Prostate gland (tissue), 2 donors: ENCODE measurements at regions of chr15 and their contacts with region 1.

Region 1: DNA sequence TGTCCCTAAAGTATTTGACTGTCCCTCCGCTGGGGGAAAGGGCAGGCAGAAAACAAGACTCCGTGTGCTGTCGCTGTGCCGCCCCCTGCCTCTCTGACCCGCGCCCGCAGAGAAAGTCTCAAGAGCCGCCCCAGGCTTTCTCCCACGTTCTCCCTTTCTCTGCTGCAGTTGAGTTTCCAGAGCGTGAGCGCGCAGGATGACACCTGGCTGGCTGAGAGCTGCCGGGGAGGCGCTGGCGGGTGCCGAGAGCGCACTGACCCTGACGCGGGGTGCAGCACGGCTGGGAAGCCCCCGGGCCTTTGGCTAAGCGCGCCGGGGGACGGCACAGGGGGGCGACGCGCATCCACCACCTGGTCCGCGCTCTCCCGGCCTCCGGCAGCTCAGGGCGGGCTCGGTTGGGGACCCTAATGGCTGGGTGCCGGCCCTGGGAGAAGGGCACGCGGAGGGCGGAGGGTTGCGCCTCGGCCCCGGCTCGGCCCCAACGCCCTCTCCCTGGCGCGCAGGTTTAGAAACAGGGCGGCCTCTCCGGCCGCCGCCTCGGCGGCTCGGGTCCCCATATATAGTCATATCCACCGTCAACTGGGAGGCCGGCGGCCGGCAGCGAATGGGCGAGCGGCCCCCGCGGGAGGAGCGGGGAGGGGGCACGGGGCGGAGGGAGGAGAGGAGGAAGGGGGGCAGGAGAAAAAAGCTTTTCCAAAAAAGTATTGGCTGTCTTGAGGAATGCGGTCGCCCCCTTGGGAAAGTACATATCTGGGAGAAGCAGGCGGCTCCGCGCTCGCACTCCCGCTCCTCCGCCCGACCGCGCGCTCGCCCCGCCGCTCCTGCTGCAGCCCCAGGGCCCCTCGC is at the start of gene TPM1:
- DNase-seq: peak; percentile 63
- H3K4me3 ChIP-seq: peak within 1 kb of the TSS; percentile 51 to 58
- H3K27ac ChIP-seq: peak within 1 kb of the TSS; percentile 91 to 95
- H3K4me1 ChIP-seq: peaks cover under 1% of the 10 kb centered on the region
- H3K27me3 ChIP-seq: no peaks in the 10 kb centered on the region
- CTCF ChIP-seq: no peak
- POLR2A ChIP-seq: peak; percentile 26
- total RNA-seq, gene TPM1: 564 to 629 TPM

Region 2: DNA sequence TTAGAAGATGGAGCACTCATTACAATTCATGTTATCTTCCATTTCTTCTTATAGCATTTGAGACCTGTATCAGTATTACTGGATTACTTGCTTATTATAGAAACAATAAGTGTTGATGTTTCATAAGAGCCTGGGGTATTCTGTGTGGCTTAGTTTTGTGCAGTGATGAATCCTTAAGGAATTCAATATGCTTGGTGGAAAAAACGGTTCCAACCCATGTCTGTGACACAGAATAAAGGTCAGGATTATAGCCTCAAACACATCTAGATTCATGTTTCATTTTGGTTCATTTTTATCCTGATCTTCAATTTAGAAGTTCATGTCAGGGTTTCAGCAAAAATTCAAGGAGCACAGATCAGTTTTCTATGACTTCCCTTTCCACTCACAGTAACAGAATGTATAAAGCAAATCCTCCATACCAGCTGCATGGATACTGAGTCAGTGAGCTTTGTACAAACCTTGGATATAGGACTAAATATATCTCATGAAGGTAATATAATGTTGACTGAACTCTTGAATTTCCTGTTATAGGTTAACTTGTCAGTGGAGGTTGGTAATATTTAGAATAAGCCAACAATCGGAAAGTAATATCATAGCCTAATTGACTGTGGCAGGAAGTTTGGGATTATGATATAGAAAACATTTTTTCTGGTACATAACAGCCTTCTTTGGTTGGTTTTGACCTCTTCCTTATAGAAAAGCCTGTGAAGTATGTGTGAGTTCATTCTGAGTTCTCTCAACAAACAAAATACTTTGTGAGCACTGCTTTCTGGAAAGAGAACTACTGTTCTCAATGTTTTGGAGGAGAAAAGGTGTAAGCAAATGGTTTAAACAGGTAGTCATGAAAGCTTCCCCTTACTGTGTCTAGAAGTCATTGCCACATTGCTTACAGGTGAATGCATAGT is 217.8 kb before region 1 on chr15:
- intact Hi-C with region 1: no loop called
- DNase-seq: no peak
- H3K4me3 ChIP-seq: no peak overlapping the region
- H3K27ac ChIP-seq: no peak overlapping the region
- H3K4me1 ChIP-seq: no peaks in the 10 kb centered on the region
- H3K27me3 ChIP-seq: no peaks in the 10 kb centered on the region
- CTCF ChIP-seq: no peak
- POLR2A ChIP-seq: no peak

Region 3: GRCh38 chr15:62847900-62848489 is 194.2 kb before region 1 on chr15:
- intact Hi-C with region 1: loop called (anchors 2 kb)
- DNase-seq: no peak
- H3K4me3 ChIP-seq: no peak overlapping the region
- H3K27ac ChIP-seq: no peak overlapping the region
- H3K4me1 ChIP-seq: no peaks in the 10 kb centered on the region
- H3K27me3 ChIP-seq: no peaks in the 10 kb centered on the region
- CTCF ChIP-seq: peak; percentile 14 to 46 (median 42)
- POLR2A ChIP-seq: no peak